CD8-positive, alpha-beta T cell (primary cell): ENCODE measurements at regions of chr11 and their contacts with region 1.

Region 1: GRCh38 chr11:130314750-130315285 is at the start of gene ZBTB44:
- DNase-seq: peak; percentile 84 to 95 (median 91)
- ATAC-seq: peak; percentile 82
- H3K4me3 ChIP-seq: peak within 1 kb of the TSS; percentile 79 to 87
- H3K4me3 Mint-ChIP-seq: peak within 1 kb of the TSS; percentile 90
- H3K27ac ChIP-seq: peak within 1 kb of the TSS; percentile 76 to 84
- H3K27ac Mint-ChIP-seq: peak within 1 kb of the TSS; percentile 99
- H3K4me1 ChIP-seq: peaks cover 31% of the 10 kb centered on the region
- H3K4me1 Mint-ChIP-seq: peaks cover 41% of the 10 kb centered on the region
- H3K27me3 ChIP-seq: no peaks in the 10 kb centered on the region
- H3K27me3 Mint-ChIP-seq: no peaks in the 10 kb centered on the region
- CTCF ChIP-seq: no peak
- total RNA-seq, gene ZBTB44: 31.8 to 35.0 TPM

Region 2: DNA sequence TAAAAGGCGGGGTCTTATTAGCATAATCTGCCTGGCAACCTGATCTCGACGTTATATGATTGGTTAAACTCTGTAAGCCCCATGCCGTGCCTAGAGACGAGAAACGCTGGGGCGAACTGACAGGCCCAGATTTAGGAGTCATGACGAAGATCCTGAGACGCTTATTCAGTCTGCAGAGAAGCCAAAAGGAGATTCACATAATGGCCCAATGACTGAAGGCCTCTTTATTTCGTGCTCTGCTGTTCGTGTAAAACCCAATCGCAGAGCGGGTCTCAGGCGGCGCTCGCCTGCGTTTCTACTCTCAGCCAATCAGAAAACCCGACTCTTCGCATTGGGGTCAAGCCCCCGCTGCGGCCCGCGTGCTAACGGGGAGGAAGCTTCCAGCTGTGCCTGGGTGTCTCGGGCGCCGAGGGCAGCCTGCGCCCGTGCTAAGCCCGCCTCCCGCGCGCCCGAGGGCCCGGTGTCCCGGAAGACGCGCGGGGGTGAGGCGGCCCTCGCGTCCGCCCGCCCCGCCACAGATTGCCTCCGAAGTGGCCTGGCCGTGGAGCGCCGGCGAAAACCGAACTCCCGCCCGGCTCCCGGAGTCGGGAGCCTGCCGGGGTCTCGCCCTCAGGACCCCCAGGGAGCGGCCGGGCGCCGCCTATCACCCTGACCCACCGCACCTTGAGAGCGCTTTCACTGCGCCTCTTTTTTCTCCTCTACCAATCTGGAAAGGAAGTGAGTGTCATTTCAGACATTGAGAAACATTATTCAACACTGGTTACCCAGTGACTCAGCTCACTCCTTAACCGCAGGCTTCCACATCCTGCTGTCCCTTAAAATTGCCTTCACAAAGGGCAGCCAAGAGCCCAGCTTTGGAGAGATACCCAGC is 311.7 kb before region 1 on chr11:
- CTCF ChIA-PET with region 1: interaction called, 3 read pairs
- POLR2A ChIA-PET with region 1: no interaction called
- intact Hi-C with region 1: loop called (anchors 1 to 2 kb)
- DNase-seq: peak; percentile 82 to 96 (median 89)
- ATAC-seq: peak; percentile 77
- H3K4me3 ChIP-seq: peak overlapping the region; percentile 69 to 71
- H3K4me3 Mint-ChIP-seq: peak overlapping the region; percentile 99
- H3K27ac ChIP-seq: peak overlapping the region; percentile 99 to 100
- H3K27ac Mint-ChIP-seq: peak overlapping the region; percentile 100
- H3K4me1 ChIP-seq: peaks cover 24% of the 10 kb centered on the region
- H3K4me1 Mint-ChIP-seq: peaks cover 37% of the 10 kb centered on the region
- H3K27me3 ChIP-seq: no peaks in the 10 kb centered on the region
- H3K27me3 Mint-ChIP-seq: no peaks in the 10 kb centered on the region
- CTCF ChIP-seq: no peak

Region 3: GRCh38 chr11:130213143-130213978 is 101.5 kb before region 1 on chr11:
- CTCF ChIA-PET with region 1: no interaction called
- POLR2A ChIA-PET with region 1: no interaction called
- intact Hi-C with region 1: loop called in 1 of 2 experiments (anchors 2 kb)
- DNase-seq: peak; percentile 43 to 87 (median 71)
- ATAC-seq: peak; percentile 98
- H3K4me3 ChIP-seq: no peak overlapping the region
- H3K4me3 Mint-ChIP-seq: no peak overlapping the region
- H3K27ac ChIP-seq: no peak overlapping the region
- H3K27ac Mint-ChIP-seq: no peak overlapping the region
- H3K4me1 ChIP-seq: no peaks in the 10 kb centered on the region
- H3K4me1 Mint-ChIP-seq: no peaks in the 10 kb centered on the region
- H3K27me3 ChIP-seq: peaks cover 0 to 3% of the 10 kb centered on the region in 2 experiments
- H3K27me3 Mint-ChIP-seq: peaks cover 6% of the 10 kb centered on the region
- CTCF ChIP-seq: peak; percentile 97

Region 4: GRCh38 chr11:130434521-130435223 is 119.9 kb after region 1 on chr11:
- CTCF ChIA-PET with region 1: no interaction called
- POLR2A ChIA-PET with region 1: no interaction called
- intact Hi-C with region 1: loop called in 1 of 2 experiments (anchors 10 kb)
- DNase-seq: peak; percentile 31 to 86 (median 66)
- ATAC-seq: peak; percentile 92
- H3K4me3 ChIP-seq: peak overlapping the region; percentile 67 to 77
- H3K4me3 Mint-ChIP-seq: no peak overlapping the region
- H3K27ac ChIP-seq: no peak overlapping the region
- H3K27ac Mint-ChIP-seq: no peak overlapping the region
- H3K4me1 ChIP-seq: peaks cover 10% of the 10 kb centered on the region
- H3K4me1 Mint-ChIP-seq: peaks cover 15% of the 10 kb centered on the region
- H3K27me3 ChIP-seq: peaks cover 5 to 6% of the 10 kb centered on the region in 2 experiments
- H3K27me3 Mint-ChIP-seq: peaks cover 19% of the 10 kb centered on the region
- CTCF ChIP-seq: peak; percentile 89

Region 5: GRCh38 chr11:130448416-130449309 is 133.8 kb after region 1 on chr11 and contains the start of gene ADAMTS15:
- CTCF ChIA-PET with region 1: no interaction called
- POLR2A ChIA-PET with region 1: no interaction called
- intact Hi-C with region 1: no loop called
- DNase-seq: peak in 2 of 9 experiments; percentile 19 to 34
- ATAC-seq: peak; percentile 17
- H3K4me3 ChIP-seq: peak within 1 kb of the TSS in 1 of 2 experiments; percentile 28
- H3K4me3 Mint-ChIP-seq: peak within 1 kb of the TSS; percentile 63
- H3K27ac ChIP-seq: no peak within 1 kb of the TSS
- H3K27ac Mint-ChIP-seq: no peak within 1 kb of the TSS
- H3K4me1 ChIP-seq: no peaks in the 10 kb centered on the region
- H3K4me1 Mint-ChIP-seq: peaks cover 12% of the 10 kb centered on the region
- H3K27me3 ChIP-seq: peaks cover 0 to 9% of the 10 kb centered on the region in 2 experiments
- H3K27me3 Mint-ChIP-seq: peaks cover 30% of the 10 kb centered on the region
- CTCF ChIP-seq: no peak
- total RNA-seq, gene ADAMTS15: not detected